Esophagus muscularis mucosa (tissue), 4 donors: ENCODE measurements at regions of chr14 and their contacts with region 1.

Region 1: DNA sequence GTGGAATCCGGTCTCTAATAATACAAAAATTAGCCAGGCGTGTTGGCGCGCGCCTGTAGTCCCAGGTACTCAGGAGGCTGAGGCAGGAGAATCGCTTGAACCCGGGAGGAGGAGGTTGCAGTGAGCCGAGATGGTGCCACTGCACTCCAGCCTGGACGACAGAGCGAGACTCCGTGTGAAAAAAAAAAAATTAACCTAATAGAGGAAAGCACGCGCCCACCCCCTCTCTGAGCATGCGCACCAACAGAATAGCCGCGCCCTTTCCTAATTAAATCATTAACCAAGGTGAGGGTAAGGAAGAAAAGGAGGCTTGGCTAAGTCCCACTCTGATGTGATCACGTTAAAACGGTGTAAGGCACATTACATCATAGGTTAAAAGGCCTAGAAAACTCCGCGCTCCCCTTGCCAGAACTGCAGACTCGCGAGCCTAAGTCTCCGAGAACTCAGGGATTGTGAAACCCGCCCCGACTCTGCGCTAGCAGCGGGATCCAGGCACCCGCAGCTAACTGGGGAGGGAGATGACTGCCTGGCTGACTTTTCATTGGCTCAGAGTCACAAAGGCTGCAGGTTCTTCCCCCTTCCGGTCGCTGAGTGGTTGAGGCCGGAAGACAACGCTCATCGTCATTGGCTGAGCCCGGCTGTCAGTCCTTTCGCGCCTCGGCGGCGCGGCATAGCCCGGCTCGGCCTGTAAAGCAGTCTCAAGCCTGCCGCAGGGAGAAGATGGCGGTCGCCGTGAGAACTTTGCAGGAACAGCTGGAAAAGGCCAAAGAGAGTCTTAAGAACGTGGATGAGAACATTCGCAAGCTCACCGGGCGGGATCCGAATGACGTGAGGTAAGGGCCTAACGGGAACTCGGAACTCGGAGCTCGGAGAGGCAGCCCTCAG is at the start of gene PNN:
- DNase-seq: peak; percentile 99
- H3K4me3 ChIP-seq: peak within 1 kb of the TSS; percentile 70 to 92 (median 78)
- H3K27ac ChIP-seq: peak within 1 kb of the TSS; percentile 92 to 96 (median 93)
- H3K4me1 ChIP-seq: peaks cover 18 to 34% (median 29%) of the 10 kb centered on the region in 4 donors
- H3K27me3 ChIP-seq: no peaks in the 10 kb centered on the region
- CTCF ChIP-seq: no peak
- EP300 ChIP-seq: no peak
- POLR2A ChIP-seq: peak; percentile 85
- total RNA-seq, gene PNN: 21.0 to 32.8 (median 21.6) TPM

Region 2: GRCh38 chr14:38366374-38366773 is 808.4 kb before region 1 on chr14:
- intact Hi-C with region 1: no loop called
- DNase-seq: no peak
- H3K4me3 ChIP-seq: no peak overlapping the region
- H3K27ac ChIP-seq: no peak overlapping the region
- H3K4me1 ChIP-seq: no peaks in the 10 kb centered on the region
- H3K27me3 ChIP-seq: no peaks in the 10 kb centered on the region
- CTCF ChIP-seq: no peak
- EP300 ChIP-seq: no peak
- POLR2A ChIP-seq: no peak

Region 3: GRCh38 chr14:38384741-38385140 is 790.1 kb before region 1 on chr14:
- intact Hi-C with region 1: no loop called
- DNase-seq: no peak
- H3K4me3 ChIP-seq: no peak overlapping the region
- H3K27ac ChIP-seq: no peak overlapping the region
- H3K4me1 ChIP-seq: no peaks in the 10 kb centered on the region
- H3K27me3 ChIP-seq: no peaks in the 10 kb centered on the region
- CTCF ChIP-seq: no peak
- EP300 ChIP-seq: no peak
- POLR2A ChIP-seq: no peak

Region 4: DNA sequence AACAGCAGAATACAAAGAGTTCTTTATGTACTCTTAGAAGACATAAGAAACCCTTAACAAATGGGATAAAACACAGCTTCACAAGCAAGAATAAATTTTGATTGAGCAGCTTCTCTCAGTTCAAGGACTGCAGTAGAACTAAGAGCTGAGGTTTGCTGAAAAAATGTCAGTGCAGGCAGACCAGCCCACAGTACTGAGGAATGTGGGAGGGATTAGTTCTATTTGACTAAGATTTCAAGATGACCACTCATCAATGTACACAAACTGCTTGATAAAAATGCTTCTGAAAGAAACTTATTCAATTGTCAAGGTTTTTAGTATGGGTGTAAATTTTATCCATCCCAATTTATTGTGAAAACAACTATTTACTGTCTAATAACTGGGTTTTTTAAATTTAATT is 210.2 kb before region 1 on chr14:
- intact Hi-C with region 1: no loop called
- DNase-seq: no peak
- H3K4me3 ChIP-seq: no peak overlapping the region
- H3K27ac ChIP-seq: no peak overlapping the region
- H3K4me1 ChIP-seq: peaks cover 0 to 14% (median 0%) of the 10 kb centered on the region in 4 donors
- H3K27me3 ChIP-seq: no peaks in the 10 kb centered on the region
- CTCF ChIP-seq: no peak
- EP300 ChIP-seq: no peak
- POLR2A ChIP-seq: no peak

Region 5: GRCh38 chr14:39102969-39103957 is 71.5 kb before region 1 on chr14 and contains the start of gene SEC23A:
- intact Hi-C with region 1: loop called (anchors 5 kb)
- DNase-seq: peak; percentile 98
- H3K4me3 ChIP-seq: peak within 1 kb of the TSS; percentile 84 to 99 (median 90)
- H3K27ac ChIP-seq: peak within 1 kb of the TSS; percentile 98 to 100 (median 99)
- H3K4me1 ChIP-seq: peaks cover 16 to 61% (median 51%) of the 10 kb centered on the region in 4 donors
- H3K27me3 ChIP-seq: no peaks in the 10 kb centered on the region
- CTCF ChIP-seq: peak in 1 of 3 experiments; percentile 4
- EP300 ChIP-seq: no peak
- POLR2A ChIP-seq: peak; percentile 83
- total RNA-seq, gene SEC23A: 181 to 222 (median 203) TPM

Region 6: DNA sequence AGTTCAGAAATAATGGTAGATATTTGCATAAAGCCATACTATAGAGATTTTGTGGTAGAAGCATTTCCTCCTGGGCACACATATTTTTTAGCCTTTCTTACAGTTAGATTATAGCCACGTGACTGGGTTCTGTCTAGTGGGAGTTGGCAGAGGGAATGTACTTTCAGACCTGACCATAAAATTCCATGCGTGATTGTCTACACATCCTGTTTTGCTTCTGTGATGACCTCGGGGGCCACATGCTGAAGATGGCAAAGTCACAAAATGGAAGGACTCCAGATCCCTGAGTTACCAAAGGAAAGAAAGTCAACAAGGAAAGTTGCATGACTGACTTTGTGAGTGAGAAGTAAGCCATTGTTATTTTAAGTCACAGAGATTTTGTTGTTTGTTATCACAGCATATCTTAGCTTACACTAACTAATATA is 44.3 kb after region 1 on chr14:
- intact Hi-C with region 1: no loop called
- DNase-seq: no peak
- H3K4me3 ChIP-seq: no peak overlapping the region
- H3K27ac ChIP-seq: no peak overlapping the region
- H3K4me1 ChIP-seq: peaks cover 0 to 6% (median 5%) of the 10 kb centered on the region in 4 donors
- H3K27me3 ChIP-seq: no peaks in the 10 kb centered on the region
- CTCF ChIP-seq: no peak
- EP300 ChIP-seq: no peak
- POLR2A ChIP-seq: no peak

Region 7: GRCh38 chr14:39432179-39432618 is 257.4 kb after region 1 on chr14 and contains the start of gene FBXO33:
- intact Hi-C with region 1: loop called (anchors 5 kb)
- DNase-seq: peak; percentile 100
- H3K4me3 ChIP-seq: peak within 1 kb of the TSS; percentile 76 to 92 (median 91)
- H3K27ac ChIP-seq: peak within 1 kb of the TSS; percentile 96 to 97 (median 97)
- H3K4me1 ChIP-seq: peaks cover 24 to 47% (median 46%) of the 10 kb centered on the region in 4 donors
- H3K27me3 ChIP-seq: no peaks in the 10 kb centered on the region
- CTCF ChIP-seq: no peak
- EP300 ChIP-seq: peak; percentile 32
- POLR2A ChIP-seq: no peak
- total RNA-seq, gene FBXO33: 9.1 to 21.9 (median 12.8) TPM